ENCODE measurements at regions of chr3 and their contacts with region 1.

Region 1: DNA sequence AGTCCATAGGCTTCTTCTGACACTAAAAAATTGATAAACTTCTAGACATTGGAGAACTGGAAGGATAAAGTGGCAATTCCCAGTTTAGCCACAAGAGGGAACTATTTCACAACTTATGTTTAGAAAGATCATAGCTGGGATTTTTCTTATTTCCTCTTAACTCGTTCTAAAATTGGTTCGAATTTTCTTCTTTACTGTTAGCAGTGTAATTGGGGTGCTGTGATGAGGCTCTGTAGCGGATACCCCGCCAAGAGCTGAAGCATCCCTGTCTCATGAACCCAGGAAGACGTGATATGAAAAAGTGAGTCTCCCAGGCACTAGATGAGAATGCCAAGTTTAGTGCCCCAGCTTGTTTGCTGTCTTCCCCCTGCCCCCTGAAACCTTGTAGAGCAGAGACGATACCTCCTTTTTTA is 85.1 kb downstream of the PDCD6IP start:
- DNase-seq: no peak
- H3K4me3 Mint-ChIP-seq: peak overlapping the region; percentile 13
- H3K27ac Mint-ChIP-seq: no peak overlapping the region
- H3K4me1 Mint-ChIP-seq: peaks cover 4% of the 10 kb centered on the region
- H3K27me3 Mint-ChIP-seq: peaks cover 4% of the 10 kb centered on the region

Region 2: DNA sequence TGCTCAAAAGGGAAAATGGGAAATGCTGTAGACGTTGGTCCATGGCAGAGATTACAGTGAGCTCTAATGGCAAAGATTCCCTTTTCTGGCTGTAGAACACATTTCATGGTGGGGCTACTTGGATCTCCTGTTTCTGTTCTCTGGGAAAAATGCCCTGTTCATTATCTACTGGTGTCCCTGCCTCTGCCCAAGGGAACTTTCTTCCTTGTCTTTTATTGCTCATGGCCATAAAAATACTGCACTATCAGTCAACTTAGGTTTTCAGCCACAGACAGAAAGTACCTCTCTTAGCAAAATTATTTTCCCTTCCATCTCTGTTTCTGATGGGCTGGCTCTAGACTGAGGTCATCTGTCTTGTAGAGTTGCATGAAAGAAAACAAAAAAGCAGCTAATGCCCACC is 13.8 kb after region 1 on chr3:
- CTCF ChIA-PET with region 1: interaction called, 11 read pairs
- intact Hi-C with region 1: no loop called
- DNase-seq: no peak
- H3K4me3 Mint-ChIP-seq: no peak overlapping the region
- H3K27ac Mint-ChIP-seq: no peak overlapping the region
- H3K4me1 Mint-ChIP-seq: no peaks in the 10 kb centered on the region
- H3K27me3 Mint-ChIP-seq: no peaks in the 10 kb centered on the region

Region 3: GRCh38 chr3:34015204-34016142 is 131.9 kb after region 1 on chr3:
- CTCF ChIA-PET with region 1: interaction called, 18 read pairs
- intact Hi-C with region 1: loop called (anchors 1 kb)
- DNase-seq: no peak
- H3K4me3 Mint-ChIP-seq: no peak overlapping the region
- H3K27ac Mint-ChIP-seq: no peak overlapping the region
- H3K4me1 Mint-ChIP-seq: peaks cover 28% of the 10 kb centered on the region
- H3K27me3 Mint-ChIP-seq: peaks cover 3% of the 10 kb centered on the region

Region 4: GRCh38 chr3:34106879-34107278 is 223.3 kb after region 1 on chr3:
- CTCF ChIA-PET with region 1: interaction called, 4 read pairs
- intact Hi-C with region 1: loop called (anchors 1 kb)
- DNase-seq: peak; percentile 57
- H3K4me3 Mint-ChIP-seq: no peak overlapping the region
- H3K27ac Mint-ChIP-seq: no peak overlapping the region
- H3K4me1 Mint-ChIP-seq: no peaks in the 10 kb centered on the region
- H3K27me3 Mint-ChIP-seq: peaks cover 4% of the 10 kb centered on the region

Region 5: DNA sequence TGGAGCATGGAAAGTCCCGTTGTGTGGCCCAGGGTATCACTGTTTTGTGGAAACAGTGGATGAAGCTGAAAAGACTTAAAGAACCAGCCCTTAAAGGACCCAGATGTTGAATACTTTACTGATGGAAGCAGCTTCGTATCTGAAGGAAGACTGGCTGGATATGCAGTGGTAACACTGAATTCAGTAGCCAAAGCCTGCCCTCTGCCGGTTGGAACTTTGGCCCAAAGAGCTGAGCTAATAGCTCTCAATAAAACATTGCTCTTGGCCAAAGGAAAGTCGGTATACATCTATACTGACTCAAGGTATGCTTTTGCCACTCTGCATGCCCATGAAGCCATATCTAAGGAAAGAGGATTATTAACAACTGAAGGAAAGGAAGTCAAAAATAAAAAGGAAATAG is 800.3 kb after region 1 on chr3:
- CTCF ChIA-PET with region 1: interaction called, 15 read pairs
- intact Hi-C with region 1: loop called (anchors 1 kb)
- DNase-seq: peak; percentile 67
- H3K4me3 Mint-ChIP-seq: no peak overlapping the region
- H3K27ac Mint-ChIP-seq: no peak overlapping the region
- H3K4me1 Mint-ChIP-seq: no peaks in the 10 kb centered on the region
- H3K27me3 Mint-ChIP-seq: no peaks in the 10 kb centered on the region